Common myeloid progenitor, CD34-positive (primary cell): ENCODE measurements at regions of chr5 and their contacts with region 1.

Region 1: DNA sequence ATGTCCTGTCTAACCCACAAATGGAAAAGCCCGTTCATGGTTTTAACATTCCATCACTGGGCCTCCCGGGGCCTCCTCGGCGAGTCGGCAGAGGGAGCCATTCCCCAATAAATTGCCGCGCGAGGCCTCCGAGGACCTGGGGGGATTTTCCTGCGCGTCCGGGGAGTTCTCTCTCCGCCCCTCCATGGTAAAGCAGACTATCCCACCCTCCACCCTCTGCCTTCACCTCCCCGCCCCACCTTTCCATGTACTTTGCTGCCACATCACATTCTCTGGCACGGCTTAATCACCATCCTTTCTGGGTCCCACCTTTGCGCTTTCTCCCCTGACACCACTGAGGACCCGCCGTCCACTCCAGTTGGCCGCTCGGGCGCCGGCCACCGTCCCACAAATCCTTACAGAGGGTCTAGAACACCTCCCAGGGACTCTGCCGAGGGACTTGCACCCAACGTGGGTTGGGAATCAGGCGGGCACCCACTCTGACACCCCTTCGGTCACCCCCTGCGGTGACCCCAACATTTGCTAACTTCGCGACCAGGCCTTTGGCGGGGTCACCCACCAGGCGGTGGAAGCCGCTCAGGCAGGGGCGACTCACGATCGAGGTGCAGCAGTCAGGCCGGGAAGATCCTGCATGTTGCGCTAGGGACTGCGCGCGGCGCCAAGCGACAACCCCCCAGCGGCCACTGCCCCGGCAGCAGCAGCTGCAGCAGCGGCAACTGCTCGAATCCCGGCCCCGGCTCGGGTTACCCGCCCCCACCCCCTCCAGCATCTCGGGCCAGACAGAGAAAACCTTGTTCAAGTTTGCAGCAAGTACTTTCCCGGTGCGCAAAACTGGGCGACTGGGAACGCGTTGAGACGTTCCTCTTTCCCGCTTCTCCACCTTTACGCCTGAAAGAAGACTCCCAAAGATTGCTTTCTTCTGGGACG is at the start of gene MEGF10:
- DNase-seq: peak in 2 of 3 donors; percentile 52 to 53
- H3K4me3 ChIP-seq: peak within 1 kb of the TSS in 6 of 7 experiments; percentile 26 to 82 (median 68)
- H3K27ac ChIP-seq: no peak within 1 kb of the TSS
- H3K4me1 ChIP-seq: peaks cover 0 to 12% (median 11%) of the 10 kb centered on the region in 4 experiments
- H3K27me3 ChIP-seq: peaks cover 13 to 35% (median 17%) of the 10 kb centered on the region in 5 experiments

Region 2: DNA sequence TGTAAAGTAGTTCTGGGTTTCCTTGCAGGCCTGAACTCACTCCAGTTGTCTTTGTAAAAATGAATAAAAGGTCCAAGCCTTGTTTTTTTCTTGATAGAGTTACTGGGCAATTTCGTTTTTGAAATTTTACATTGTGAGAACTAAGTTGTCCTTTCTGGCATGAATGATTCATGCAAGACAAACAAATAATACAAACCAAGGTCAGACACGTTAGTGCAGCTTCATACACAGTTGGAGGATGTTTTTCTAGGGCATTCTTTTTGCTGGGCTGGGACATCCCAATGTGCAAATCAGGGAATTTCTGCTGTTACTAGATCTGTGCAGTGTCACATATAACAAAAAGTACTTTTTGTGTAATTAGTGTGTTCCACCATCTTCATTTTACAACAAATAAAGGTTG is 96.3 kb after region 1 on chr5:
- CTCF ChIA-PET with region 1: no interaction called
- POLR2A ChIA-PET with region 1: no interaction called
- DNase-seq: no peak
- H3K4me3 ChIP-seq: no peak overlapping the region
- H3K27ac ChIP-seq: no peak overlapping the region
- H3K4me1 ChIP-seq: no peaks in the 10 kb centered on the region
- H3K27me3 ChIP-seq: no peaks in the 10 kb centered on the region

Region 3: DNA sequence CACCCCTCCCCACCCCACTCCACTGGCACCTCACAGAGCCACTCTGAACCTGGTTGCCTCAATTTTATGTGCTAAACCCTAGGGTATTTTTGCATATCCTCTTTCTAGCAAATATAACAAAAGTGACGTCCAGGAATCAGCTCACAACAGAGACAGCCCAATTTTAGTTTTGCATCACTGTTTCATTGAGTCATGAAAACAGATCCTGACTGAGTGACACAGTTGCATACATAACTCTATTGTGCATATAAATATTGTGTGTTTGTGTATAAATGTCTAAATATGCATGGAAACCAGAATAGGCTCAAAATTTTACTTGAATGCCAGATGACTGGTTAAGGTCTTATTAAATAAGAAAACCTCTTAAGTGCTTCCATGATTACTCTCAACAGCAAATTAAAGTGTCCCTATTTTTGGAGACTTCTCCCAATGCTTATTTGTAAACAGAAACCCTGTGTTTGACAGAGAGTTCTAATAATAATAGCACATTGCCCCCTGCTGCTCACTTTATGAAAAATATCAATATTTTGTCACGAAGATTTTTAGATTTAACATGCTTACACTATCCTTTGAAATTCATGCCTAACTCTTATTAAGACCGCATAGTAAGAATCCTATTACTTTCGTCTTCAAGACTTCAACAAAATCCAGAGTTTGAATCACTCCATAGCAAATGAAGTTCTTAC is 151.7 kb after region 1 on chr5:
- CTCF ChIA-PET with region 1: interaction called, 12 read pairs
- POLR2A ChIA-PET with region 1: no interaction called
- DNase-seq: peak; percentile 24 to 50 (median 46)
- H3K4me3 ChIP-seq: no peak overlapping the region
- H3K27ac ChIP-seq: no peak overlapping the region
- H3K4me1 ChIP-seq: no peaks in the 10 kb centered on the region
- H3K27me3 ChIP-seq: peaks cover 0 to 2% (median 0%) of the 10 kb centered on the region in 5 experiments

Region 4: GRCh38 chr5:127492854-127493738 is 202.8 kb after region 1 on chr5:
- CTCF ChIA-PET with region 1: interaction called, 21 read pairs
- POLR2A ChIA-PET with region 1: no interaction called
- DNase-seq: peak; percentile 54 to 73 (median 70)
- H3K4me3 ChIP-seq: no peak overlapping the region
- H3K27ac ChIP-seq: no peak overlapping the region
- H3K4me1 ChIP-seq: no peaks in the 10 kb centered on the region
- H3K27me3 ChIP-seq: peaks cover 0 to 2% (median 0%) of the 10 kb centered on the region in 5 experiments